Right cardiac atrium (tissue), 5 donors: ENCODE measurements at regions of chr1 and their contacts with region 1.

Region 1: GRCh38 chr1:18575620-18576019 is 55.0 kb upstream of the PAX7 start:
- DNase-seq: peak in 2 of 3 donors; percentile 80 to 92
- ATAC-seq: peak in 1 of 2 donors; percentile 58
- H3K4me3 ChIP-seq: no peak overlapping the region
- H3K27ac ChIP-seq: no peak overlapping the region
- H3K4me1 ChIP-seq: no peaks in the 10 kb centered on the region
- H3K27me3 ChIP-seq: no peaks in the 10 kb centered on the region

Region 2: GRCh38 chr1:17648457-17649145 is 927.0 kb before region 1 on chr1:
- intact Hi-C with region 1: loop called in 2 of 4 experiments (anchors 10 kb)
- DNase-seq: no peak
- ATAC-seq: no peak
- H3K4me3 ChIP-seq: no peak overlapping the region
- H3K27ac ChIP-seq: no peak overlapping the region
- H3K4me1 ChIP-seq: peaks cover 2% of the 10 kb centered on the region
- H3K27me3 ChIP-seq: no peaks in the 10 kb centered on the region

Region 3: DNA sequence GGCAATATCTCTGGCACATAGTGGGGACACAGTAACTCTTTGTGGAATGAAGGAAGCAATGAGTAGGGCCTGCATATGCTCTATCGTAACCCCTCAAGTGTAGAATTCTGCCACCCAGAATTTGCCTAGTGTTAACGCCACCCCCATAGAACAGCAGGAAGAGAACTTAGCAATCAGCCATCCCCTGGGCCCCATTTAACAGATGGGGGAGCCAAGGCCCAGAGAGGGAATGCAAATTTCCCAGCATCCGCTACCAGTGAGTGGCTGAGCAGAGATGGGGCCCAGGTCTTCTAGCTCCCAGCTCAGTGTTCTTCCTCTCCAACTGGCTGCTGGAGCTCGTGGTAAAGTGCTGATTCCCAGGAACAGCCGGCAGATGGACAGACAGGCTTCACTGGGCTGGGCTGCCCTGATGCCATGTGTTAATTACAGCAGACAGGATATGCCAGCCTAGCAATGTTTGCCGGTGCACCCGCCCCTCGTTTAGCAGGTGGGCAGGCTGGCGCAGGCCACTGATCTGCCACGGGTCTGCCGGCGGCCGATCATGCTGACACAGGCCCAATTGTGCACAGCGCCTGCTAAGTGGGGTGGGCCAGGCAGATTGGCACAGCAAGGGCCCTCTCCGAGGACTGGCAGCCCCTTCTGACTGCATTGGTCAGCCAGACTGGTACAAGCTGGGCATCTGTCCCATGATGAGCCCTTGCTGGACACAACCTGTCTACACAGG is 296.1 kb before region 1 on chr1:
- intact Hi-C with region 1: no loop called
- DNase-seq: no peak
- ATAC-seq: peak in 1 of 2 donors; percentile 23
- H3K4me3 ChIP-seq: no peak overlapping the region
- H3K27ac ChIP-seq: no peak overlapping the region
- H3K4me1 ChIP-seq: no peaks in the 10 kb centered on the region
- H3K27me3 ChIP-seq: no peaks in the 10 kb centered on the region

Region 4: GRCh38 chr1:18299441-18300338 is 275.9 kb before region 1 on chr1:
- intact Hi-C with region 1: loop called in 1 of 4 experiments (anchors 10 kb)
- DNase-seq: no peak
- ATAC-seq: no peak
- H3K4me3 ChIP-seq: no peak overlapping the region
- H3K27ac ChIP-seq: no peak overlapping the region
- H3K4me1 ChIP-seq: no peaks in the 10 kb centered on the region
- H3K27me3 ChIP-seq: no peaks in the 10 kb centered on the region

Region 5: GRCh38 chr1:18511149-18511873 is 64.3 kb before region 1 on chr1:
- intact Hi-C with region 1: no loop called
- DNase-seq: no peak
- ATAC-seq: no peak
- H3K4me3 ChIP-seq: no peak overlapping the region
- H3K27ac ChIP-seq: no peak overlapping the region
- H3K4me1 ChIP-seq: no peaks in the 10 kb centered on the region
- H3K27me3 ChIP-seq: no peaks in the 10 kb centered on the region